ENCODE measurements at regions of chr1 and their contacts with region 1.

Region 1: DNA sequence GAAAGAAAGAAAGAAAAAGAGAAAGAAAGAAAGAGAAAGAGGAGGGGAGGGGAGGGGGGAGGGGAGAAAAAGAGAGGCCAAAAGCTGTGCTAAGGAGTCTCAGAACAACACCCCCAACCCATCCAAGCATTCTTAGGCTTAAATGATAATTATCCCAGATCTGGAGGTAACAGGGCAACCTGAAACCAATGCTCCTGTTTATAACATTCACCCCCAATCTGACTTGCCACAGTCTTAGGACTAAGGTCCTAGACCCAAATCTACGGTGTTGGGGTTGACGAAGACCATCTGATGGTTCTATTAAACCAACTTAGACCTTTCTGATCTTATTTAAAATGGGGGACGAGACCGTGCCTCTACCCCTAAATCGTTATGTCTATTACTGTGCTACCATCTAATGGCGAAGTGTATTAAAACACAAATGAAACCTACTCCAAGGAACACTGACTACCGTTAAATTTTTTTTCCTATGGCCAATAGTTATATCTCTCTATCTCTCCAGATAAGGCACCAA is 119.3 kb upstream of the CDC42BPA start:
- DNase-seq: no peak
- H3K4me3 Mint-ChIP-seq: peak overlapping the region; percentile 33
- H3K27ac Mint-ChIP-seq: peak overlapping the region; percentile 31
- H3K4me1 Mint-ChIP-seq: peaks cover 25% of the 10 kb centered on the region
- H3K27me3 Mint-ChIP-seq: peaks cover 29% of the 10 kb centered on the region
- CTCF ChIP-seq: peak; percentile 42

Region 2: GRCh38 chr1:226279498-226279897 is 1158.1 kb before region 1 on chr1:
- CTCF ChIA-PET with region 1: no interaction called
- intact Hi-C with region 1: no loop called
- DNase-seq: no peak
- H3K4me3 Mint-ChIP-seq: no peak overlapping the region
- H3K27ac Mint-ChIP-seq: no peak overlapping the region
- H3K4me1 Mint-ChIP-seq: no peaks in the 10 kb centered on the region
- H3K27me3 Mint-ChIP-seq: no peaks in the 10 kb centered on the region
- CTCF ChIP-seq: no peak

Region 3: GRCh38 chr1:226912587-226913176 is 524.9 kb before region 1 on chr1:
- CTCF ChIA-PET with region 1: interaction called, 4 read pairs
- intact Hi-C with region 1: loop called (anchors 1 kb)
- DNase-seq: peak; percentile 82
- H3K4me3 Mint-ChIP-seq: no peak overlapping the region
- H3K27ac Mint-ChIP-seq: no peak overlapping the region
- H3K4me1 Mint-ChIP-seq: no peaks in the 10 kb centered on the region
- H3K27me3 Mint-ChIP-seq: no peaks in the 10 kb centered on the region
- CTCF ChIP-seq: peak; percentile 69

Region 4: DNA sequence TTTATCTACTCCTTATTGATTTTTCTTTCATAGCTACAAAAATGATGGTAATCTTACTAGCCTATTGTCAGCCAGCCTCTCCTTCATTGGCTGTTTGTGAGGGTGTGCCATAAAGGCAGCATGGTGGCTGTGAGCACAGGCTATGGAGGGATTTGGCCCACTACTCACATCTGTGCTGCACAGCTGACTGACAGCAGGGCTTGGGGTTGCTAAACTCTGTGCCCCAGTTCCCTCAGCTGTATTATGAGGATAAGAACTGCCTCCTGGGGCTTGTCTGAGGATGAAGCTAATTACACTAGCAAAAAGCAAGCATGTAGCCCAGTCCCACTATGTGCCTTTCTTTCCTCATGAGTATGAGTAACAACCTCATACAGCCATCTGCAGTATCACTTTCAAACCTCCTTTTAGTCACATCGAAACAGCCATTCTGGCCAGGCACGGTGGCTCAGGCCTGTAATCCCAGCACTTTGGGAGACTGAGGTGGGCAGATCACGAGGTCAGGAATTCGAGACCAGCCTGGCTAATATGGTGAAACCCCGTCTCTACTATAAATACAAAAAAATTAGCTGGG is 431.2 kb before region 1 on chr1:
- CTCF ChIA-PET with region 1: no interaction called
- intact Hi-C with region 1: loop called (anchors 10 kb)
- DNase-seq: no peak
- H3K4me3 Mint-ChIP-seq: no peak overlapping the region
- H3K27ac Mint-ChIP-seq: no peak overlapping the region
- H3K4me1 Mint-ChIP-seq: peaks cover 9% of the 10 kb centered on the region
- H3K27me3 Mint-ChIP-seq: no peaks in the 10 kb centered on the region
- CTCF ChIP-seq: no peak

Region 5: DNA sequence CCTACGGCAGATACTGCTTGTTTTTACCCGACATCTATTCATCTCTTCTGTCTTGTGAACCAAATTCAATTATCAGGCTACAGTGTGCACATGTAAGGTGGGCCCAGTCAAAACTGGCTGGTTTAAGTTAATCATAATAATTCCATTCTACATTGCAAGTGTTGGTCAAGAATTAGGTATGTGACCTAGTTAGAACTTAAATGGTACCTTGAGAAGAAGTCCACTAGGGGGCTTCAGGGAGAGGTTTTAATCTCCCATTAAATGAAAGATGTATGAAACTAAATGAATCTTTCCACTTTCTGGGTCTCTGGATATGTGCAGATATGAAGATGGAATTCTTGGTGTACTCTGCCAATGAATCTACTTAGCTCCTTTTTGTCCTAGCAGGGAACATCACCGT is 306.4 kb before region 1 on chr1:
- CTCF ChIA-PET with region 1: no interaction called
- intact Hi-C with region 1: loop called (anchors 1 kb)
- DNase-seq: no peak
- H3K4me3 Mint-ChIP-seq: no peak overlapping the region
- H3K27ac Mint-ChIP-seq: no peak overlapping the region
- H3K4me1 Mint-ChIP-seq: peaks cover 6% of the 10 kb centered on the region
- H3K27me3 Mint-ChIP-seq: no peaks in the 10 kb centered on the region
- CTCF ChIP-seq: peak; percentile 30

Region 6: DNA sequence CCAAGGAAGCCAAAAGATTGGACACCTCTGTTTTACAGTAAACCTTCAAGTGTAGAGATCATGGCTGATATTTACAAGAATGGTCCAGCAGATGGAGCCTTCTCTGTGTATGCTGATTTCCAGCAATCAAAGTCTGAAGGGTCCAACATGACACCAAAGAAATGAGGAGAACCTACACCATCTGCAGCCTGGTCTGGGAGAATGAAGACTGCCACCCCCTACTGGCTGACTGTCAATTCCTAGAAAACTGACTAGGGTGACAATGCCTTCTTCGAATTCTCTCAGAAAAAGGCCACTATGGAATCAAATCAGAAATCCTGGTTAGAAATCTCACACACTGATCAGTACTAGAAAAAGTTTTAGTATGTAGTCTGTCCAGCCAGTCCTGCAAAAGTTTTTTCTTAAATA is 202.6 kb before region 1 on chr1:
- CTCF ChIA-PET with region 1: no interaction called
- intact Hi-C with region 1: loop called (anchors 1 kb)
- DNase-seq: peak; percentile 70
- H3K4me3 Mint-ChIP-seq: no peak overlapping the region
- H3K27ac Mint-ChIP-seq: no peak overlapping the region
- H3K4me1 Mint-ChIP-seq: peaks cover 8% of the 10 kb centered on the region
- H3K27me3 Mint-ChIP-seq: no peaks in the 10 kb centered on the region
- CTCF ChIP-seq: peak; percentile 69

Region 7: DNA sequence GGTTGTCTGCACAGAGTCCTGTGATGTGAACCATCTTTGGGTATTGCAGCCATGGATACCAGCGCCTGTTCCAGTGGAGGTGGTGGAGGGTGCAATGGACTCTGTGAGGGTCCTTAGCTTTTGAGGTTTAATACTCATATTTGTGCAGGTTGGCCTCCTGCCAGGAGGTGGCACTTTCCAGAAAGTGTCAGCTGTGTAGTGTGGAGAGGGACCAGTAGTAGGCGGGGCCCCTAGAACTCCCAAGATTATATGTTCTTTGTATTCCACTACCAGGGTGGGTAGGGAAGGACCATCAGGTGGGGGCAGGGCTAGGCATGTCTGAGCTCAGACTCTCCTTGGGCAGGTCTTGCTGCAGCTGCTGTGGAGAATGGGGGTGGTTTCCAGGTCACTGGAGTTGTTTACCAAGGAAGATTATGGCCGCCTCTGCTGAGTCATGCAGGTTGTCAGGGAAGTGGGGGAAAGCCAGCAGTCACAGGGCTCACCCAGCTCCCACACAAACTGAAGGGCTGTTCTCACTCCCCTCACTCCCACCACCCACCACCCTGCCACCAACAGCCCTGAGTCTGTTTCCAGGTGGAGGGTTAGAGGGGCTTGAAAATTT is 94.6 kb after region 1 on chr1:
- CTCF ChIA-PET with region 1: no interaction called
- intact Hi-C with region 1: no loop called
- DNase-seq: no peak
- H3K4me3 Mint-ChIP-seq: no peak overlapping the region
- H3K27ac Mint-ChIP-seq: no peak overlapping the region
- H3K4me1 Mint-ChIP-seq: no peaks in the 10 kb centered on the region
- H3K27me3 Mint-ChIP-seq: no peaks in the 10 kb centered on the region
- CTCF ChIP-seq: no peak

Measured in Calu3 (cell line).